Prostate gland (tissue), 2 donors: ENCODE measurements at regions of chr6 and their contacts with region 1.

Region 1: GRCh38 chr6:25472306-25472705 is 179.7 kb upstream of the SCGN start:
- DNase-seq: no peak
- H3K4me3 ChIP-seq: no peak overlapping the region
- H3K27ac ChIP-seq: no peak overlapping the region
- H3K4me1 ChIP-seq: no peaks in the 10 kb centered on the region
- H3K27me3 ChIP-seq: no peaks in the 10 kb centered on the region
- CTCF ChIP-seq: peak in 1 of 4 experiments; percentile 15
- POLR2A ChIP-seq: no peak

Region 2: DNA sequence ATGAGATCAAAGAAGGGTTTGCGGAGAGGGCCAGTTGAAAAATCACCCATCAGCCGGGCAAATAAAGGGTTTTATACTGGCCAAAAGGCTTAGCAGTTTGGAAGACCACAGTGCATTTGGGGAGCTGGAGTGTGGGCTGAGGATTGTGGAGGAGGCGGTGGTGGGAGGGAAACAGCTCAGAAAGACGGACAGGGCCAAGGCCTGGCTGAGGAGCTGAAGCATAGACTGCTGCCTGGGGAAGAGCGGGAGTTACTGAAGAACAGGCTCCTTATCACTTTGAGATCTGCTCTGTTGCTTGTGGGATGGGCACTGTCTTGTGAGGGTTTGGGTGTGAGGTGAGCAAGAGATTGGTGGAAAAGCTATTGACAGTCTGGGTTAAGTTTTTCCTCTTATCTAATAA is 48.9 kb before region 1 on chr6:
- intact Hi-C with region 1: loop called (anchors 10 kb)
- DNase-seq: no peak
- H3K4me3 ChIP-seq: no peak overlapping the region
- H3K27ac ChIP-seq: no peak overlapping the region
- H3K4me1 ChIP-seq: no peaks in the 10 kb centered on the region
- H3K27me3 ChIP-seq: no peaks in the 10 kb centered on the region
- CTCF ChIP-seq: no peak
- POLR2A ChIP-seq: no peak